Activated CD8-positive, alpha-beta T cell treated with anti-CD3 and anti-CD28 coated beads for 36 hours (primary cell): ENCODE measurements at regions of chr21 and their contacts with region 1.

Region 1: DNA sequence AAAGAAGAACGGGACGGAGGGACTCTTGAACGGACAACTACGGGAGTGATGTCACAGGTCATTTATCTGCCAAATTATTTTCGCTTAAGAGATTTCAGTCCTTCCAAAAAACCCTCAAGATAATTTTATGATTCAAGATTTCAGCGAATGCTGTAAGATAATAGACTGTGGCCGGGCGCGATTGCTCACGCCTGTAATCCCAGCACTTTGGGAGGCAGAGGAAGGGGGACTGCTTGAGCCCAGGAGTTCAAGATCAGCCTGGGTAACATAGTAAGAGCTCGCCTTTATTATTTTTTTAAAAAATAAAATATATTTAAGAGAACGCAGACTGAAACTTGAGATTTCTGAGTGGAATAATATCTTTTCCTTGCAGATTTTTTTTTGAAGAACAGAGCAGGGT is 609 bp downstream of the RWDD2B start:
- DNase-seq: no peak
- ATAC-seq: peak; percentile 7
- H3K4me3 Mint-ChIP-seq: peak overlapping the region; percentile 83
- H3K27ac Mint-ChIP-seq: peak overlapping the region; percentile 96
- H3K4me1 Mint-ChIP-seq: peaks cover 41% of the 10 kb centered on the region
- H3K27me3 Mint-ChIP-seq: no peaks in the 10 kb centered on the region
- CTCF ChIP-seq: no peak

Region 2: DNA sequence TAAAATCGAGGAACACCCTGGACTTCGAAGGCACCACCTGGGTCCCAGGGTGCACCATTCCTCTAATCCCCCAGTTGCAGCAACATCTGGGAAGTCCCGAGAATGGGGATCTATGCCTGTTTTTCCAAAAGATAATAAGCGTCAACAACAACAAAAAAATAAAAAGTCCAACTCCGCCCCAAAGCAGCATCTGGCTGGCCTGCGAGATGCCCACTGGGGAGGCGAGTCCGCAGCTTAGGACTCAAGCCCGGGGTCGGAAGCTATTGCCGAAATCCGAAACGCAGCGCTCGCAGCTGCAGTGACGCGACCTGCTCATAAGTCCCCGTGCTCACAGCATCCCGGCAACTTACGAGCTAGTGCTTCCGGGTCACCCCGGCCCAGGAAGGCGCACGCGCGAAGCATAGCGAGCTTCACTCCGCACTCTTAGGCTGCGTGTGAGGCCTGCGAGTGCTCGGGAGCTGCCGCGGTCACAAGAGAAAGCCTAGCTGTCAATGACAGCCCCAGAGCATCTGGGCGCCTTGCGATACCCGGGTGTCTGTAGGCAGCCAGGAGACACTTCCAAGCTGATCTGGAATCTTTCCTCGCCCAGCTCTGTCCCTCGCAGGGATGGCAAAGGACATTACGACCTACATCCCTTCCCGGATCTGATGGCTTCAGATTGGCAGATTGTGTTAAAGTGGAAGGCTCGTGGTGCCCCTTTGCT is 15.9 kb before region 1 on chr21:
- CTCF ChIA-PET with region 1: interaction called, 6 read pairs
- POLR2A ChIA-PET with region 1: interaction called, 52 read pairs
- intact Hi-C with region 1: no loop called
- DNase-seq: peak; percentile 96
- ATAC-seq: peak; percentile 100
- H3K4me3 Mint-ChIP-seq: peak overlapping the region; percentile 91
- H3K27ac Mint-ChIP-seq: peak overlapping the region; percentile 97
- H3K4me1 Mint-ChIP-seq: peaks cover 13% of the 10 kb centered on the region
- H3K27me3 Mint-ChIP-seq: no peaks in the 10 kb centered on the region
- CTCF ChIP-seq: no peak